H1 (cell line): ENCODE measurements at regions of chr20 and their contacts with region 1.

Region 1: GRCh38 chr20:6381887-6382286 is 259.1 kb upstream of the FERMT1 start:
- DNase-seq: no peak
- H3K4me3 ChIP-seq: no peak overlapping the region
- H3K27ac ChIP-seq: no peak overlapping the region
- H3K4me1 ChIP-seq: peaks cover 0 to 4% (median 1%) of the 10 kb centered on the region in 4 experiments; a peak in 1 of 7 replicates
- H3K27me3 ChIP-seq: no peaks in the 10 kb centered on the region
- CTCF ChIP-seq: peak in 2 of 3 experiments; percentile 46 to 74; a peak in 2 of 4 replicates
- EP300 ChIP-seq: no peak
- POLR2A ChIP-seq: no peak
- RAD21 ChIP-seq: peak; percentile 34 to 42

Region 2: GRCh38 chr20:6333110-6333509 is 48.8 kb before region 1 on chr20:
- CTCF ChIA-PET with region 1: no interaction called
- POLR2A ChIA-PET with region 1: no interaction called
- DNase-seq: no peak
- H3K4me3 ChIP-seq: no peak overlapping the region
- H3K27ac ChIP-seq: no peak overlapping the region
- H3K4me1 ChIP-seq: no peaks in the 10 kb centered on the region
- H3K27me3 ChIP-seq: no peaks in the 10 kb centered on the region
- CTCF ChIP-seq: no peak
- EP300 ChIP-seq: no peak
- POLR2A ChIP-seq: no peak
- RAD21 ChIP-seq: no peak

Region 3: DNA sequence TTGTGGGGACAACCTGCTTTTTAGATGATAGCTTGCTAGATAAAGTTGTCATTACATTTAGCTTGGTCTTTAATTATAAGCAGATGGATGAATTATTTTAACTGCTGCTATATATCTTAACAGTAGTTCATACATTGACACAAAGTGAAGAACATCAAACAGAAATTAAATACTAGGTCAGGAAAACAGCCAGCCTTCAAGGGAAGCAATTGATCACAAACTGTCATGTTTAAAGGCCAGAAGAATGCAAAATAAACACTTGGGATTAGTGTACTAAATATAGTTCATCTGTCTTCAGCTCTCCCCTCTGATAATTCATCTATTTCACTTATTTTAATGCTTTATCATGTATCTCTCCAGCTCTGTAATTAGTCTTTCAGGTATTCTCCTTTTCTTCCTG is 34.0 kb before region 1 on chr20:
- CTCF ChIA-PET with region 1: interaction called, 10 read pairs
- POLR2A ChIA-PET with region 1: no interaction called
- DNase-seq: no peak
- H3K4me3 ChIP-seq: no peak overlapping the region
- H3K27ac ChIP-seq: no peak overlapping the region
- H3K4me1 ChIP-seq: no peaks in the 10 kb centered on the region
- H3K27me3 ChIP-seq: no peaks in the 10 kb centered on the region
- CTCF ChIP-seq: no peak
- EP300 ChIP-seq: no peak
- POLR2A ChIP-seq: no peak
- RAD21 ChIP-seq: no peak

Region 4: DNA sequence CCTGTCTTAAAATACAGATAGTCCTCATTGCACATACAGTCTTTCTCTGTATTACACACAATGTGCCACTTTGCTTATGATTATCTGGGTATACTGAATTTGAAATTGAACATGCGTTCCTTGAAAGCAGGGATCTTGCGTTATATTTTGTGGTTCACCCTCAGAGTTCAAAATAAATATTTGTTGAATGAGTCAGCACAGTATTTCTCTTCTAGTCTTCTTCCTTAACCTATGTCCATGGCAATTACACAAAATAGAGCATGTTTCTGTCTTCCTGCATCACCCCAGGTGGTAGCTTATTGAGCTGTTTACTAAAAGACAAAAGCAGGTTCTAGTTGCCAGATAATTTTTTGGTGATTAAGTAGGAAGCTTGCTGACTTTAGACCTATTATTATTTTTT is 13.8 kb after region 1 on chr20:
- CTCF ChIA-PET with region 1: interaction called, 35 read pairs
- POLR2A ChIA-PET with region 1: interaction called, 3 read pairs
- DNase-seq: no peak
- H3K4me3 ChIP-seq: no peak overlapping the region
- H3K27ac ChIP-seq: no peak overlapping the region; the same call in 1 of the 2 replicates
- H3K4me1 ChIP-seq: peaks cover 0 to 8% (median 5%) of the 10 kb centered on the region in 4 experiments; a peak in 4 of 7 replicates
- H3K27me3 ChIP-seq: no peaks in the 10 kb centered on the region
- CTCF ChIP-seq: no peak
- EP300 ChIP-seq: no peak
- POLR2A ChIP-seq: no peak
- RAD21 ChIP-seq: no peak